IMR-90 (cell line): ENCODE measurements at regions of chr6 and their contacts with region 1.

Region 1: GRCh38 chr6:3258720-3259490 is at the start of gene PSMG4:
- DNase-seq: peak; percentile 82
- ATAC-seq: peak; percentile 96
- H3K4me3 ChIP-seq: peak within 1 kb of the TSS; percentile 99
- H3K27ac ChIP-seq: peak within 1 kb of the TSS; percentile 85
- H3K4me1 ChIP-seq: peaks cover 3% of the 10 kb centered on the region; the same call in 1 of the 2 replicates
- H3K27me3 ChIP-seq: peaks cover 1% of the 10 kb centered on the region; the same call in 1 of the 2 replicates
- CTCF ChIP-seq: no peak
- POLR2A ChIP-seq: peak; percentile 61
- RAD21 ChIP-seq: no peak
- total RNA-seq, gene PSMG4: 5.6 and 6.7 TPM in 2 replicates

Region 2: DNA sequence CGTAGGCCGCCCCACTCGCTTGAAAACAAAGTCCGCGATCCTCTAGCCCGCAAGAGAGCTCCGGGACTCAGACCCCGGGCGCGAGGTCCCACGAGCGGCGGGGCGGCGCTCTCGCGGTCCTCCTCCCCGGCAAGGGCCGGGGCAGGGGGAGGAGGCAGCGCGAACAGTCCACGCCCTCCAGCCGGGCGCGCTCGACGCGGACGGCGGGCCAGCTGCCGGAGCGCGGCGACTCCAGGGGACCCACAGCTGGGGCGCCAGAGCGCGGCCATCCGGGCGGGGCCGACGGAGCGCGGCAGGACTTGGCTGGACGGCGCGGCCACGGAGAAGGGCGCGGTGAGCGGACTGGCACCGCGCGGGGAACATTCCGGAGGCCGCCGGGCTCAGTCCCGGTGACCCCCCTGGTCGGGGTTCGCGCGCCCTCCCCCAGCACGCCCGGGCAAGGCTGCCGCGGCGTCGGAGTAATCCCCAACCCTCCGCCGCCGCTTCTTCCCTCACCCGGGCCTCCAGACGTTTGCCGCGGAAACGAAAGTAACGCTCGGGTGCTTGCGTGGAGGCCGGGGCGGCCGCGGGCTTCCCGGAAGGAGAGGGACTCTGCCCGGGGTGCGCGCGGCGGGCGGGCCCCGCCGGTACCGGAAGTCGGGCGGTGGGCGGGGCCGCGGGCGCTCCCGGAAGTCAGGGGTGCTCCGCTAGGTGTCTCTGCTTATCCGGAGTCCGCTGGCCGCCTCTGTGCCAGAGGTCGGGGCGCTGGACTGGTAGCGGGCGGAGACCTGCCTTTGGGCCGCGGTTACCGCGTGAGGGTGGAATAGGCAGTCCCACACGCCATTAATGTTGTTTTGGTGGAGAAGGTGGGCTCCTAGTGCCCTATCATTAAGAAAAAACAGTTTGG is 190.3 kb before region 1 on chr6 and contains the start of gene RIPK1:
- CTCF ChIA-PET with region 1: no interaction called
- POLR2A ChIA-PET with region 1: no interaction called
- dilution Hi-C with region 1: no loop called
- in situ Hi-C with region 1: no loop called
- intact Hi-C with region 1: loop called (anchors 5 kb)
- DNase-seq: peak; percentile 84
- ATAC-seq: peak; percentile 80
- H3K4me3 ChIP-seq: peak within 1 kb of the TSS; percentile 83
- H3K27ac ChIP-seq: peak within 1 kb of the TSS; percentile 95
- H3K4me1 ChIP-seq: peaks cover 7% of the 10 kb centered on the region; the same call in 1 of the 2 replicates
- H3K27me3 ChIP-seq: no peaks in the 10 kb centered on the region
- CTCF ChIP-seq: peak; percentile 48
- POLR2A ChIP-seq: peak; percentile 92
- RAD21 ChIP-seq: no peak
- total RNA-seq, gene RIPK1: 25.6 and 28.6 TPM in 2 replicates

Region 3: DNA sequence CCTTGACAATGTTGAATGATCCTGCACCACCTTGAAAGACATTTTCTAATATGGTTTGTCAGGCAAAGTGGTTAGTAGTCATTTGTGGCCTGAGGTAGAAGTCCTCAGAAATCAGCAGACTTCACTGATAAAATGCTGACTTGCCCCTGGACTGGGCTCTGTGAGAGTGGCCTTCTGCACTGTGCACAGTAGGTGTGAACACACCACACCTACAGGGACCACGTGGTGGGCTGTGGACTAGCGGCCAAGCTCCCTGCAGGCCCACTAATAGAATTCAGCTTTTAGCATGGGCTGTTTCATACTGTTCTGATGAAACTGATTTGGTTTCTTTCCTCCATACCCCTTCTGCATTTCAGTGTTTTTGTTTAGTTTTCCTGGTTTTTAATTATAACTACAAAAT is 133.1 kb before region 1 on chr6:
- CTCF ChIA-PET with region 1: interaction called, 4 read pairs
- POLR2A ChIA-PET with region 1: interaction called, 12 read pairs
- dilution Hi-C with region 1: no loop called
- in situ Hi-C with region 1: loop called (anchors 5 kb)
- intact Hi-C with region 1: loop called (anchors 2 kb)
- DNase-seq: no peak
- ATAC-seq: no peak
- H3K4me3 ChIP-seq: no peak overlapping the region
- H3K27ac ChIP-seq: no peak overlapping the region
- H3K4me1 ChIP-seq: no peaks in the 10 kb centered on the region
- H3K27me3 ChIP-seq: no peaks in the 10 kb centered on the region
- CTCF ChIP-seq: no peak
- POLR2A ChIP-seq: no peak
- RAD21 ChIP-seq: no peak

Region 4: DNA sequence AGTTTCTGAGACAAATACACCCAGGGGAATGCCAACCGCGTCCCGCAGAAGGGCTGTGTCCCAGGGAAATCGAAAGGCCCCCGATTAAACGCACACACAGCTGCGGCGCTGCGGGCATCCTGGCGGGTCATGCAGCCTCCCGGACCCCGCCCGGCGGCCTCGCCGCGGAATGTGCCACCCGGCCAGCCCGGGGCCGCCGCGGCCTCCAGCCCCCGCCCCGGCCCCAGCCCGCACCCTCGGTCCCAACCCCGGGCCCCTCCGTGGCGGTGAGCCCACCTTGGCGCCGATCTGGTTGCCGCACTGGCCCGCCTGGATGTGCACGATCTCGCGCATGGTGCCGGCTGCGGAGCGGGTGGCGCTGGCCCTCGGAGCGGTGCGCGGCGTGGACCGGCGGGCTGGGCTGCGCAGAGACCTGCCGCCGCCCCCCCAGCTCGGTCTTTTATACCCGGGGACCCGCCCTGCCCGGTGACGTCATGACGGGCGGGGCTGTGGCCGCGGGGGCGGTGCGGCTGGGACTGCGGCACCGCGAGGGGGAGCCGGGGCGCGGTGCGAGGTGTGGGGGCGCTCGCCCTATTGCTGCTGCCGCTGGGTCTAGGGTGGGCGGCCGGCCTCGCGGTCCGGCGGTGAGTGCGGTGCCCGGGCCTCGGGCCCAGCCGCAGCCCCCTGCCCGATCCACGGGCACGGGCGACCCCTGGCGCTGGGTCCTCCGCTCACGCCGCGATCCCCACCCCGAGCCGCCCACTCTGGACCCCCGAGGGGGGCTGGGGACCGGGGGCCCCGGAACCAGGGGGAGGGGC is 101.6 kb before region 1 on chr6 and contains the start of gene TUBB2A:
- CTCF ChIA-PET with region 1: no interaction called
- POLR2A ChIA-PET with region 1: interaction called, 3 read pairs
- dilution Hi-C with region 1: no loop called
- in situ Hi-C with region 1: no loop called
- intact Hi-C with region 1: loop called (anchors 2 kb)
- DNase-seq: peak; percentile 78
- ATAC-seq: peak; percentile 90
- H3K4me3 ChIP-seq: peak within 1 kb of the TSS; percentile 99
- H3K27ac ChIP-seq: peak within 1 kb of the TSS; percentile 60
- H3K4me1 ChIP-seq: peaks cover 2% of the 10 kb centered on the region; the same call in 1 of the 2 replicates
- H3K27me3 ChIP-seq: no peaks in the 10 kb centered on the region
- CTCF ChIP-seq: peak; percentile 85
- POLR2A ChIP-seq: peak; percentile 99
- RAD21 ChIP-seq: peak; percentile 62
- total RNA-seq, gene TUBB2A: 164 and 182 TPM in 2 replicates

Region 5: DNA sequence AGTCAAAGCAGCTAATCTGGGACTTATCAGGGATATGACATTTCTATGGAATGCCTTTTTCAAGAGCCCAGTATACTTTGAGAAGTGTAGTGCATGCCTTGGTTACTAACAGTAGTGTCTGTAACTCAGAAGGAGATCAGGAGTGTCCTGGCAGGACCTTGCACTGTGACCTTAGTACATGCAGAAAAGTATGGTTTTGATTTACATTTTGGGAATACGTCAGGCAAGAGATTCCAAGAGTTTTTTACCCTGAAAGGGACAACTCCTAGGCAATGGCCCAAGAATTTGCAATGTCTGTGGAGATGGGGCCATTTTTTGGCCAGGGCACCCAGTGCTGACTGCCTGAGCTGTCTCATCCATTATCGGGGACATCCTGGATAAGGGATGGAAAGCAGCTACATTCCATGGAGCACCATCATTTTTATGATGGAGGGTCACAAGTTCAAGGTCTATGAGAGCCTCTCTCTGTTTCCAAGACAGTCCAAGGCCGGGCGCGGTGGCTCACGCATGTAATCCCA is 670.4 kb after region 1 on chr6:
- CTCF ChIA-PET with region 1: no interaction called
- POLR2A ChIA-PET with region 1: no interaction called
- dilution Hi-C with region 1: no loop called
- in situ Hi-C with region 1: no loop called
- intact Hi-C with region 1: no loop called
- DNase-seq: peak; percentile 77
- ATAC-seq: peak; percentile 83
- H3K4me3 ChIP-seq: no peak overlapping the region
- H3K27ac ChIP-seq: peak overlapping the region; percentile 56; the same call in 1 of the 2 replicates
- H3K4me1 ChIP-seq: peaks cover 14% of the 10 kb centered on the region
- H3K27me3 ChIP-seq: no peaks in the 10 kb centered on the region
- CTCF ChIP-seq: no peak
- POLR2A ChIP-seq: no peak
- RAD21 ChIP-seq: no peak